Spleen (tissue), 13 donors: ENCODE measurements at regions of chr12 and their contacts with region 1.

Region 1: DNA sequence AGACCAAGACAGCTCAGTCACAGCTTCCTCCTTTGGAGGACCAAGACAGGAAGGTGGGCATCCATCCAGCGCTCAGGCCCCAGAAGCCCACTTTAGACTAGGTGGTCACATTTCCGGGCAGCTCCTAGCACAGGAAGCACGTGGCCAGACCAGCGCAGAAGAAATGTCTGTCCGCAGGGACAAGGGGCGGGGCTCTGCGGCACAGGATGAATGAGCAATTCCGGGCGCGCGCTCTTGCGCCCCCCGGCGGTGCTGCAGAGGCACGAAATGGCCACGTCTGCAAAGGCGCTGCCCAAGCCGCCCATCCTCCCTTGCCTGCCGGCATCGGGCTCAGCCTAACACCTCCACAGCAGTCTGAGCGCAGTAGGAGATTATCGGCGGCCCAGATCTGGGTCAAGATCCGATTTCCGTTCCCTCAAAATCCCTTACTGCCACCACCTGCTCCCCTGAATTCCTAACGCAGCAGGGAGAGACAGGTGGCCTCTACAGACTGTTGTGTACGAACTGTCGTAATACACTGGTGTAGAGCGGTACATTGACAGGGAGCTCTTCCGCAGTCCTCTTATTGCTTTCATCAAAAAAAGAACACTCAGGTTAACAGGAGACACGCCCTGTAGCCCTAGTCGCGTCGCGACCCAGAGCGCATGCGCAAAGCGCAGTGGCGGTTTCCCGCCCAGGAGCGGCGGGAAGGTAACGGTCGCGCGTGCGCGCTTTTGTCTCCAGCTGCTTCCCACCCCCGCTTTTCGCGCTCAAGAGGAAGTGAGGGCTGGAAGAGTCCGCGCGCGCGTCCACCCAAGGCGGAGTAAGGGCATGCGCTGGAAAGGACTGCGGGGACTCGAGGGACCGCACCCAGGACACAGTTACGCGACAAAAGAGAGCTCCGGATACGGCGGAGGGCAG is 794 bp downstream of the TUBA1B start:
- DNase-seq: peak; percentile 98
- H3K4me3 ChIP-seq: peak overlapping the region; percentile 73 to 98 (median 92)
- H3K27ac ChIP-seq: peak overlapping the region; percentile 99 to 100 (median 100)
- H3K4me1 ChIP-seq: peaks cover 26 to 60% (median 41%) of the 10 kb centered on the region in 6 donors
- H3K27me3 ChIP-seq: no peaks in the 10 kb centered on the region
- CTCF ChIP-seq: peak; percentile 91 to 97 (median 95)
- POLR2A ChIP-seq: peak in 2 of 3 donors; percentile 36 to 70

Region 2: GRCh38 chr12:49188914-49189367 is 58.5 kb after region 1 on chr12 and contains the start of gene TUBA1A:
- intact Hi-C with region 1: loop called (anchors 2 kb)
- DNase-seq: peak; percentile 98
- H3K4me3 ChIP-seq: peak within 1 kb of the TSS; percentile 63 to 90 (median 80)
- H3K27ac ChIP-seq: peak within 1 kb of the TSS; percentile 97 to 100 (median 98)
- H3K4me1 ChIP-seq: peaks cover 10 to 38% (median 24%) of the 10 kb centered on the region in 6 donors
- H3K27me3 ChIP-seq: no peaks in the 10 kb centered on the region
- CTCF ChIP-seq: peak in 1 of 11 experiments; percentile 15
- POLR2A ChIP-seq: peak; percentile 66 to 95 (median 91)
- total RNA-seq, gene TUBA1A: 47.2 to 120 (median 71.7) TPM

Region 3: DNA sequence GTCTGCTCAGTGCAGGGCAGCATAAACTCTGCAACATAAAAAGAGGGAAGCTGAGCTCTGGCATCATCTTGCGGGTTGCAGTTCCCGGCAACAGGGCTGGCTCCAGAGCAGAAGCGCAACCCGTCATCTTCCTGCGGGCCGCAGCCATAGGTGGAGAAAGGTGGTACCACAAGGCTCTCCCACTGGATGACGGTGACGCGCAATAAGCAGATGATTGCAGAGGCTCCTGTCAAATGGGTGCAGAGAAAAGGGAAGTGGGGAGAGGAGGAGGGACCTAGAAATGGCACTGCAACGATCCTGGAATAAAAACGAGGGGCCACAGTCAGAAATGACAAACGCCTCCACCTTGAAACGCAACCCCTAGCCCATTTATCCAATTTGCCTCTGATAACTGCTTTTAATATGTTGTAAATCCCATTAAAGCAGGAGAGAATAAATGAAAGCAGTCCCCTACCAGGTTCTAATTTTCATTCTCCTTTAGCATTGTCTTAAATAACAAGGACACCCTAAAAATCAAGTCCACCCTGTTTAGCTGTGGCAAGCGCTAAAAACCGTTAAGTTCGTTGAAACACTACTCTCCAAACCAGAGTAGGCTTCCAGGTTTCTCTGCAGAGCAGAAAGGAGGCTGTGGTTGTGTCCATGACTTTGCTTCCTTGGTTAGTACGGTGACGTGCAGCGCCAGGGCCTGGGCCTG is 103.6 kb after region 1 on chr12:
- intact Hi-C with region 1: loop called (anchors 2 kb)
- DNase-seq: peak; percentile 94
- H3K4me3 ChIP-seq: peak overlapping the region in 6 of 8 donors; percentile 36 to 76 (median 60)
- H3K27ac ChIP-seq: peak overlapping the region; percentile 85 to 99 (median 94)
- H3K4me1 ChIP-seq: peaks cover 4 to 58% (median 31%) of the 10 kb centered on the region in 6 donors
- H3K27me3 ChIP-seq: no peaks in the 10 kb centered on the region
- CTCF ChIP-seq: no peak
- POLR2A ChIP-seq: peak in 1 of 3 donors; percentile 76